HCT116 (cell line): ENCODE measurements at regions of chr1 and their contacts with region 1.

Region 1: DNA sequence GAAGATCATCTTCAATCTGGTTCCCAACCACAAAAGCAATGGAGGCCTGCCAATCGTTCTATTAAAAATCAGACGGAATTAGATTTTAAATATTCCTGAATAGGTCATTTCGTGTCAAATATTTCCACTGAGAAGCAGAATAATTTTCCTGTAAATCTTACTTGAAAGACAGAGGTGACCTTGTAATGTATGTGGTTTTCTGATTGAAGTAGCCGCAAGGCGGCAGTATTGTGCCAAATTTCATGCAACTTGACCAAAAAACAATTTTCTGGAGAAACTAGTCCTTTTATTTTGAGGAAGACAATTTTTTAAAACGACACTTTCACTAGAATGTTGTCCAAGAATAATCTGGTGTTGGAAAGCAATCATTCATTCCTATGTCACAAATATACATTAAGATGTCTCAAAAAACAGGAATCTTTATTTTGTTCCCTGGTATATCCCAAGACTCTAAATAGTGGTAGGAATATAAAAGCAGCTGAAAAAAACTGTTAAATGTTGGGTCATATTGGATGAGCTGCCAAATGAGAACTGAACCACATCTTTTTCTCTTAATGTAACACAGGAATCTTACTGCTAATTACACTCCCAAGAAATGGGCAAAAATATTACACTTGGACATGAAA is 33.6 kb downstream of the SPAG17 start:
- DNase-seq: peak; percentile 39
- ATAC-seq: no peak
- H3K4me3 ChIP-seq: no peak overlapping the region
- H3K27ac ChIP-seq: no peak overlapping the region
- H3K4me1 ChIP-seq: no peaks in the 10 kb centered on the region
- H3K27me3 ChIP-seq: no peaks in the 10 kb centered on the region
- CTCF ChIP-seq: peak; percentile 39 to 76 (median 51); a peak in 5 of 6 replicates
- POLR2A ChIP-seq: no peak
- RAD21 ChIP-seq: peak; percentile 67

Region 2: DNA sequence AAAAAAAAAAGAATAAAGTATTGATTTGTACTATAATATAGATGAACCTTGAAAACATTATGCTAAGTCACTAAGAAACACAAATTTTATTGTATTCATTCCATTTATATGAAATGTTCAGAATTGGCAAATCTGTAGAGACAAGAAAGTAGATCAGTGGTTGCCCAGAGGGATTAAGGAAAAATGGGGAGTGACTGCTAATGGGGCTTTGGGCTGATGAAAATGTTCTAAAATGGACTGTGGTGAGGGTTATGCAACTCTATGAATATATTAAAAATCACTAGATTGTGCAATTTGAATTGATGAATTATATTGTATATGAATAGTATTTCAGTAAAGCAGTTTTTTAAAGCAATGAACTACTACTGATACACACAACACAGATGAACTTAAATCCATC is 232.0 kb before region 1 on chr1:
- CTCF ChIA-PET with region 1: no interaction called
- POLR2A ChIA-PET with region 1: no interaction called
- RAD21 ChIA-PET with region 1: no interaction called
- intact Hi-C with region 1: no loop called
- DNase-seq: no peak
- ATAC-seq: no peak
- H3K4me3 ChIP-seq: no peak overlapping the region
- H3K27ac ChIP-seq: no peak overlapping the region
- H3K4me1 ChIP-seq: no peaks in the 10 kb centered on the region
- H3K27me3 ChIP-seq: no peaks in the 10 kb centered on the region
- CTCF ChIP-seq: no peak
- POLR2A ChIP-seq: no peak
- RAD21 ChIP-seq: no peak

Region 3: DNA sequence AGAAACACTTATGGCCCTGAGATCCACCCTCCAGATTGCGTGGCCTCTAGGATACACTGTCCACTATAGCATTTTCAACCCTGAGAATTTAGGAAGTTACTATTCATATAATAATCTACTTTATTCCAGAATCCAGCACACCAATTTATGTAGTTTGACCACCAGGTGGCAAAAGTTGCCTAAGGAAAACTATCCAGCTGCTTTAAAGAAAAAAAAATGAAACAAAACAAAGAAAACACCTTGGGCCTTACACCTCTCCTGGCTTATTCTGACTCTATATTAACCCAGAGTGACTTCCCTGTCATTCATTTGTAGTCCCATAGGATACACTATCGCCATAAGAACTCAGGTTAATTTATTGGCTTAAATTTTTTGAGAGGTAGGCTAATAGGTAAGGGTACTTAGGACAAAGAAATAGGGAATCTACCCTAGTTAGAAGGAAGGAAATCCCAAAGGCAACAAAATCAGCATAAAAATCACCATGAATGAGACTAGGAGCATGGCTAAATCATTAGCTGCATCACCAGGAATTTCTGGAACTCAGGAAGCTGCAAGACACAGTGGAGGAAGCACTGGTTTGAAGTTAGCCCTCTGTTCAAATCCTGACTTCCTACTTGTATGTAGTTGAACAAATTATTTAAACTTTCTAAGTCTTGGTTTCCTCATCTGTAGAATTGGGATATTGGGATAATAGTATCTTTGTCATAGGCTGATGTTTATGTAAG is 73.9 kb before region 1 on chr1:
- CTCF ChIA-PET with region 1: no interaction called
- POLR2A ChIA-PET with region 1: no interaction called
- RAD21 ChIA-PET with region 1: no interaction called
- intact Hi-C with region 1: loop called (anchors 2 kb)
- DNase-seq: peak; percentile 40
- ATAC-seq: peak; percentile 38
- H3K4me3 ChIP-seq: no peak overlapping the region
- H3K27ac ChIP-seq: no peak overlapping the region
- H3K4me1 ChIP-seq: no peaks in the 10 kb centered on the region
- H3K27me3 ChIP-seq: peaks cover 12% of the 10 kb centered on the region; the same call in 1 of the 2 replicates
- CTCF ChIP-seq: peak; percentile 39 to 73 (median 42); a peak in 4 of 6 replicates
- POLR2A ChIP-seq: no peak
- RAD21 ChIP-seq: peak; percentile 62

Region 4: GRCh38 chr1:118247593-118247992 is 96.2 kb after region 1 on chr1:
- CTCF ChIA-PET with region 1: no interaction called
- POLR2A ChIA-PET with region 1: no interaction called
- RAD21 ChIA-PET with region 1: no interaction called
- intact Hi-C with region 1: no loop called
- DNase-seq: peak; percentile 0
- ATAC-seq: peak; percentile 72
- H3K4me3 ChIP-seq: no peak overlapping the region
- H3K27ac ChIP-seq: no peak overlapping the region
- H3K4me1 ChIP-seq: no peaks in the 10 kb centered on the region
- H3K27me3 ChIP-seq: no peaks in the 10 kb centered on the region
- CTCF ChIP-seq: peak in 2 of 3 experiments; percentile 33 to 37; a peak in 4 of 6 replicates
- POLR2A ChIP-seq: no peak
- RAD21 ChIP-seq: no peak

Region 5: GRCh38 chr1:118304722-118305359 is 153.4 kb after region 1 on chr1:
- CTCF ChIA-PET with region 1: no interaction called
- POLR2A ChIA-PET with region 1: no interaction called
- RAD21 ChIA-PET with region 1: no interaction called
- intact Hi-C with region 1: no loop called
- DNase-seq: no peak
- ATAC-seq: no peak
- H3K4me3 ChIP-seq: no peak overlapping the region
- H3K27ac ChIP-seq: no peak overlapping the region
- H3K4me1 ChIP-seq: no peaks in the 10 kb centered on the region
- H3K27me3 ChIP-seq: no peaks in the 10 kb centered on the region; the same call in 1 of the 2 replicates
- CTCF ChIP-seq: peak in 1 of 3 experiments; percentile 37; a peak in 2 of 6 replicates
- POLR2A ChIP-seq: no peak
- RAD21 ChIP-seq: no peak

Region 6: DNA sequence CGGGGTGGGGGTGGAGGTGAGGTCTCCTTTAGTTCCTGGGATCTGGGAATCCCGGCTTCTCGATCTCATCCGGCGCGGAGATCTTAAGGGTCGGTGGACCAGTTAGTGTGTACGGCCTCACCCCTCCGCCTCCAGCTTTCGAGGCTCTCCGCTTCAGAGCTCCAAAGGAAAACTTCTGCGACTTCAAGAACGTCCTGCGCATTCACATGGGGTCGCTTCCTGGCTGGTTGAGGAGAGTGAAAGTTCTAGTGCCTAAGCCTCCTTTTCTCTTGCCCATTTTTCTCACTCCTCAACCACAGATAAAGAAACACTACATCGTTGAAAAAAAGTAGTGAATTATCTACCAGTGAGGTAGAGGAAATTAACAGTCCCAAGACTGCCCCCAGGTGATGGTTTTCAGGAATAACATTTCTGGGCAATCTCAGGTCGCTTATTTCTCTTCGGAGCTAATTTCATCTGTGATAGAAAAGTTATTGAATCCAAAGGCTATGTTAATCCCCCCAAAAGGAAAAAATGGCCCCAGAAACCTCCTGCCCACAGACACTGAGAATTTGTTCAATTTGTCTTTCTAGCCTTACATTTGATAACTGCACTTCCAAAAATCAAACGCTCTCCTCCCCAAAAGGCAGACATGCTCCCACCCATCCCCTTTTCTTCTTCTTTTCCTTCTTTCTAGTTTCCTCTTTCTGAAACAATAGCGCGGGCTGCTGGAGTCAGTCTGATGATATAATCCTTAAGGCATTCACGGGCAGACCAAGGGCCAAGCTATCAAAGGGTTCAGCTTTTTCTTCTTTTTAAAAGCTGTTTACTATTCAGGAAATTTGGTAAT is 857.3 kb after region 1 on chr1:
- CTCF ChIA-PET with region 1: interaction called, 8 read pairs
- POLR2A ChIA-PET with region 1: no interaction called
- RAD21 ChIA-PET with region 1: interaction called in 1 of 2 experiments, 4 read pairs
- intact Hi-C with region 1: loop called (anchors 1 kb)
- DNase-seq: peak; percentile 7
- ATAC-seq: peak; percentile 68
- H3K4me3 ChIP-seq: no peak overlapping the region
- H3K27ac ChIP-seq: no peak overlapping the region
- H3K4me1 ChIP-seq: no peaks in the 10 kb centered on the region
- H3K27me3 ChIP-seq: no peaks in the 10 kb centered on the region
- CTCF ChIP-seq: peak; percentile 22 to 64 (median 53); a peak in 5 of 6 replicates
- POLR2A ChIP-seq: no peak
- RAD21 ChIP-seq: peak; percentile 62

Region 7: DNA sequence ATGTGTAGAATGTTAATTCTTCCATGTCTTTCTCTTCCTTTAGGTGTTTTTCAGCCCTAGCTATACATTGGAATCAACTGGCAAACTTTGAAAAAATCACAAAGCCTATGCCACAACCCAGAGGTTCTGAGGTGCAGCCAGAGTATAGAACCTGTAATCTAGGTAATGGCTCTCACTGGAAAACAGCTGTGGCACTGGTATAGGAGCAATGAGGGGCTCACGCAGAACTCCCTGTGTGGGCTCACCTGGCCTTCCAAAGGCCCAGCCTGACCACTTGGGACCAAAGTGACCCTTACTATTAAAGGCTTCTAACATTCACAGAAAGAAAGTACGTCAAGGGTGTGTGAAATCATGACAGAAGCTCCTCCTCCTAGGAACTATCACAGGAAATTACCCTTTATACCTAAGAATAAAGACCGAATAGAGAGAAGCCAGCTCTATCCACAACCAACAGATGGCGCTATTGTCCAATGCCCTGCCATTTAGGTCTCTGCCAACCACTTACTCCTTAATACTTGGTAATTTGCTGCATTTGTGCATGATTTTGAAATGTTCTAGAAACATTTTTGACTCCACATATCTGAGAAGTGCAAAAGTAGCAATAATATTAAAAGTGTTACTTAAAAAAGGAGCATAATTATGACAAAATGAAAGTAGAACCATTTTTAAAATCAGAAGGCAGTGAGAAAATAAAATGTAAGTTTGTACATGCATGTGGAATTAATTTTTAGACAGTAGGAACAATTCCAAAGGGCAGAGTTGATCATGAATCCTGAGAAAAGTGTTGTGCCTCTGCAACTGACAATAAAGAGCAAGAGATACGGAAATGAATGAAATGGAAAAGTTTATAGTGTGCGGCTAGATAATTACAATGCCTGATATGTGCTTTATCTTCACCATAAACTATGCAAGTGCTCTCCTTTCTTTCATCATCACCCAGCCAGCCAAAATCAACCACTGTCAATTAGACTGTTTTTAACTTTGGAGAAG is 1124.0 kb after region 1 on chr1:
- CTCF ChIA-PET with region 1: interaction called, 5 read pairs
- POLR2A ChIA-PET with region 1: no interaction called
- RAD21 ChIA-PET with region 1: no interaction called
- intact Hi-C with region 1: loop called (anchors 2 kb)
- DNase-seq: peak; percentile 39
- ATAC-seq: peak; percentile 65
- H3K4me3 ChIP-seq: no peak overlapping the region
- H3K27ac ChIP-seq: no peak overlapping the region
- H3K4me1 ChIP-seq: peaks cover 9 to 18% of the 10 kb centered on the region in 2 experiments
- H3K27me3 ChIP-seq: no peaks in the 10 kb centered on the region; the same call in 1 of the 2 replicates
- CTCF ChIP-seq: peak; percentile 49 to 96 (median 94); a peak in 5 of 6 replicates
- POLR2A ChIP-seq: no peak
- RAD21 ChIP-seq: peak; percentile 60